ENCODE measurements at regions of chr2 and their contacts with region 1.

Region 1: GRCh38 chr2:171160119-171160955 is at the start of gene TLK1:
- DNase-seq: no peak
- ATAC-seq: peak; percentile 64
- H3K4me3 ChIP-seq: peak within 1 kb of the TSS; percentile 91
- H3K27ac ChIP-seq: peak within 1 kb of the TSS; percentile 96
- H3K4me1 ChIP-seq: peaks cover 20% of the 10 kb centered on the region
- H3K27me3 ChIP-seq: no peaks in the 10 kb centered on the region
- CTCF ChIP-seq: peak in 1 of 3 experiments; percentile 14; a peak in 1 of 6 replicates
- EP300 ChIP-seq: no peak
- POLR2A ChIP-seq: peak; percentile 79
- RAD21 ChIP-seq: peak; percentile 39; the same call in 1 of the 2 replicates
- polyA plus RNA-seq, gene TLK1: 42.5 to 126 TPM

Region 2: GRCh38 chr2:170739048-170739447 is 421.3 kb before region 1 on chr2:
- CTCF ChIA-PET with region 1: no interaction called
- POLR2A ChIA-PET with region 1: no interaction called
- RAD21 ChIA-PET with region 1: no interaction called
- SMC1A ChIA-PET with region 1: no interaction called
- in situ Hi-C with region 1: no loop called
- intact Hi-C with region 1: no loop called
- DNase-seq: no peak
- ATAC-seq: no peak
- H3K4me3 ChIP-seq: no peak overlapping the region
- H3K27ac ChIP-seq: no peak overlapping the region
- H3K4me1 ChIP-seq: no peaks in the 10 kb centered on the region
- H3K27me3 ChIP-seq: peaks cover 0 to 2% of the 10 kb centered on the region in 2 experiments; a peak in 1 of 4 replicates
- CTCF ChIP-seq: no peak
- EP300 ChIP-seq: no peak
- POLR2A ChIP-seq: no peak
- RAD21 ChIP-seq: no peak

Region 3: GRCh38 chr2:171008550-171009205 is 151.7 kb before region 1 on chr2:
- CTCF ChIA-PET with region 1: interaction called, 5 read pairs
- POLR2A ChIA-PET with region 1: interaction called, 3 read pairs
- RAD21 ChIA-PET with region 1: no interaction called
- SMC1A ChIA-PET with region 1: interaction called, 10 read pairs
- in situ Hi-C with region 1: no loop called
- intact Hi-C with region 1: no loop called
- DNase-seq: no peak
- ATAC-seq: no peak
- H3K4me3 ChIP-seq: no peak overlapping the region
- H3K27ac ChIP-seq: no peak overlapping the region
- H3K4me1 ChIP-seq: no peaks in the 10 kb centered on the region
- H3K27me3 ChIP-seq: no peaks in the 10 kb centered on the region
- CTCF ChIP-seq: no peak
- EP300 ChIP-seq: no peak
- POLR2A ChIP-seq: no peak
- RAD21 ChIP-seq: no peak

Region 4: GRCh38 chr2:171141320-171141719 is 19.0 kb before region 1 on chr2:
- CTCF ChIA-PET with region 1: interaction called, 21 read pairs
- POLR2A ChIA-PET with region 1: interaction called, 11 read pairs
- RAD21 ChIA-PET with region 1: interaction called, 16 read pairs
- SMC1A ChIA-PET with region 1: interaction called, 69 read pairs
- in situ Hi-C with region 1: no loop called
- intact Hi-C with region 1: loop called (anchors 2 kb)
- DNase-seq: no peak
- ATAC-seq: peak; percentile 61
- H3K4me3 ChIP-seq: no peak overlapping the region
- H3K27ac ChIP-seq: no peak overlapping the region
- H3K4me1 ChIP-seq: peaks cover 29% of the 10 kb centered on the region; the same call in 1 of the 2 replicates
- H3K27me3 ChIP-seq: no peaks in the 10 kb centered on the region
- CTCF ChIP-seq: peak in 1 of 3 experiments; percentile 14; a peak in 1 of 6 replicates
- EP300 ChIP-seq: no peak
- POLR2A ChIP-seq: no peak
- RAD21 ChIP-seq: no peak

Region 5: GRCh38 chr2:171325886-171326585 is 165.7 kb after region 1 on chr2:
- CTCF ChIA-PET with region 1: interaction called, 92 read pairs
- POLR2A ChIA-PET with region 1: interaction called, 143 read pairs
- RAD21 ChIA-PET with region 1: interaction called, 102 read pairs
- SMC1A ChIA-PET with region 1: interaction called, 236 read pairs
- in situ Hi-C with region 1: no loop called
- intact Hi-C with region 1: no loop called
- DNase-seq: no peak
- ATAC-seq: peak; percentile 71
- H3K4me3 ChIP-seq: peak overlapping the region; percentile 41; the same call in 1 of the 2 replicates
- H3K27ac ChIP-seq: peak overlapping the region; percentile 100
- H3K4me1 ChIP-seq: peaks cover 57% of the 10 kb centered on the region
- H3K27me3 ChIP-seq: no peaks in the 10 kb centered on the region
- CTCF ChIP-seq: no peak
- EP300 ChIP-seq: peak; percentile 61 to 62; a peak in 2 of 4 replicates
- POLR2A ChIP-seq: no peak
- RAD21 ChIP-seq: no peak

Region 6: GRCh38 chr2:171416009-171416926 is 255.9 kb after region 1 on chr2:
- CTCF ChIA-PET with region 1: interaction called, 46 read pairs
- POLR2A ChIA-PET with region 1: interaction called, 21 read pairs
- RAD21 ChIA-PET with region 1: interaction called, 42 read pairs
- SMC1A ChIA-PET with region 1: interaction called, 65 read pairs
- in situ Hi-C with region 1: loop called (anchors 5 kb)
- intact Hi-C with region 1: loop called (anchors 1 kb)
- DNase-seq: peak; percentile 95
- ATAC-seq: peak; percentile 91
- H3K4me3 ChIP-seq: no peak overlapping the region; the same call in 1 of the 2 replicates
- H3K27ac ChIP-seq: peak overlapping the region; percentile 83
- H3K4me1 ChIP-seq: peaks cover 32% of the 10 kb centered on the region
- H3K27me3 ChIP-seq: no peaks in the 10 kb centered on the region
- CTCF ChIP-seq: peak; percentile 83 to 95 (median 88); a peak in 5 of 6 replicates
- EP300 ChIP-seq: peak in 1 of 2 experiments; percentile 50; a peak in 2 of 4 replicates
- POLR2A ChIP-seq: peak; percentile 64
- RAD21 ChIP-seq: peak; percentile 97

Measured in GM12878 (cell line).